GM12878 (cell line): ENCODE measurements at regions of chr17 and their contacts with region 1.

Region 1: DNA sequence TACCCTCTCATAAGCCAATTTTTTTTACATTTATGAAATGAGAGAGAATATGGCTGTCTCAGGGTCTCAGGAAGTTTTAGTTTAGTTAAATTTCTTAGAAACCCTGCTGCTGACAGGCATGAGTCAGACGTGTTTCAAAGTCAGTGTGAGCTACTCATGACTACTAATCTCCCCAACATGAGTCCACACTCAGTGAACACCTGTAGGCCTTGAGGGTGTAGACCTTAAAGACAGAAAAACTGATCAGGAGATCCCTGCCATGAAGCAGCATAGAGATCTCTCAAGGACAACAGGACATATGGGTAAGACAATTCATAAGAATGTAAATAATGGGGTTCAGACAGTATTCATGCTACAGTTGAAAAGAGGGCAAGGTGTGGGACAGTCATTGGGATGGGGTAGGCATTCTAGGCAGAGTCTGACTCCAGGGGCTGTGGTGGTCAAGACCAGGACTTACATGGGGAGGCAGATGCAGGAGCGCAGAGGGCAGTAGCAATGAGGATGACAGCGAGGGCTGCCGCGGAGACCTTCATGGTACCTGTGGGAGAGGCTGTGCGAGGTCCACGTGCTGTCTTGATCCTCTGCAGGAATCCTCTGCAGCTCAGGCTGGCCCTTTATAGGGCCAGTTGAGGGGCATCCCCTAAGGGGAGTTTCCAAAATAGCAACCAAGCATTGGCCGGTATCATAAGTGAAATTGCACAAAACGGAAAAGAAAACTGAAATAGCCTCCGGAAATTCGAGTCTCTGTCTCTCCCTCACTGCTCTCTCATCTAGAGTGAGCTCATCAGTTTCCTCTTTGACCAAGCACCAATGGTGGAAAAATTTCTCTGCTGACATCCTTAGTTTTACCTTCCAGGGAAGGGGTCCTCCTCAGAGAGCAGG is at the start of gene CCL5:
- DNase-seq: peak; percentile 84
- ATAC-seq: peak; percentile 95
- H3K4me3 ChIP-seq: peak within 1 kb of the TSS; percentile 26; the same call in 1 of the 2 replicates
- H3K27ac ChIP-seq: peak within 1 kb of the TSS; percentile 69
- H3K4me1 ChIP-seq: peaks cover 27% of the 10 kb centered on the region
- H3K27me3 ChIP-seq: no peaks in the 10 kb centered on the region
- CTCF ChIP-seq: no peak
- EP300 ChIP-seq: peak; percentile 34 to 81; a peak in 2 of 4 replicates
- POLR2A ChIP-seq: peak; percentile 97
- RAD21 ChIP-seq: no peak; the same call in 1 of the 2 replicates
- polyA plus RNA-seq, gene CCL5: 139 to 186 TPM

Region 2: DNA sequence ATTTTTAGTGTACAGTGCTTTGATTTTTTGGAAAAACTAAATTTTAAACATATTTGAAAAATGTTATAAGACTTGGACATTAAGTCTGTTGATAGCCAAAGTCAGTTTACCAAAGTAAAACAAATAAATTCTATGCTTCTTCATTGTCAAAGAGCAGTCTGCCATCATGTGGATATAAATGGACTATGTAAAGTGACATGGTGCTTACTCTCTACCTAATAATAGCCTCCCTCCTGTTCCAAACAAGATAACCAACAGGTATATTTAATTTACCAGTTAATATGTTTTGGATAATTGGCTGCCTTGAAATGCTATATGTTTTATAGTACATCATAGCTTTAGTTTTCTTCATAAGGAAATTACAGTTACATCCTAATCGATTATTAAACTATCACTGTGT is 54.8 kb before region 1 on chr17:
- CTCF ChIA-PET with region 1: no interaction called
- POLR2A ChIA-PET with region 1: no interaction called
- RAD21 ChIA-PET with region 1: no interaction called
- SMC1A ChIA-PET with region 1: no interaction called
- in situ Hi-C with region 1: no loop called
- intact Hi-C with region 1: no loop called
- DNase-seq: no peak
- ATAC-seq: no peak
- H3K4me3 ChIP-seq: no peak overlapping the region
- H3K27ac ChIP-seq: no peak overlapping the region
- H3K4me1 ChIP-seq: no peaks in the 10 kb centered on the region
- H3K27me3 ChIP-seq: no peaks in the 10 kb centered on the region
- CTCF ChIP-seq: no peak
- EP300 ChIP-seq: no peak
- POLR2A ChIP-seq: no peak
- RAD21 ChIP-seq: no peak

Region 3: GRCh38 chr17:35889818-35890763 is 10.1 kb after region 1 on chr17:
- CTCF ChIA-PET with region 1: interaction called, 11 read pairs
- POLR2A ChIA-PET with region 1: interaction called, 56 read pairs
- RAD21 ChIA-PET with region 1: interaction called, 125 read pairs
- SMC1A ChIA-PET with region 1: interaction called, 155 read pairs
- in situ Hi-C with region 1: no loop called
- intact Hi-C with region 1: no loop called
- DNase-seq: no peak
- ATAC-seq: peak; percentile 9; the same call in 2 of the 3 replicates
- H3K4me3 ChIP-seq: no peak overlapping the region
- H3K27ac ChIP-seq: no peak overlapping the region
- H3K4me1 ChIP-seq: peaks cover 28% of the 10 kb centered on the region
- H3K27me3 ChIP-seq: no peaks in the 10 kb centered on the region
- CTCF ChIP-seq: no peak
- EP300 ChIP-seq: no peak
- POLR2A ChIP-seq: no peak
- RAD21 ChIP-seq: no peak

Region 4: DNA sequence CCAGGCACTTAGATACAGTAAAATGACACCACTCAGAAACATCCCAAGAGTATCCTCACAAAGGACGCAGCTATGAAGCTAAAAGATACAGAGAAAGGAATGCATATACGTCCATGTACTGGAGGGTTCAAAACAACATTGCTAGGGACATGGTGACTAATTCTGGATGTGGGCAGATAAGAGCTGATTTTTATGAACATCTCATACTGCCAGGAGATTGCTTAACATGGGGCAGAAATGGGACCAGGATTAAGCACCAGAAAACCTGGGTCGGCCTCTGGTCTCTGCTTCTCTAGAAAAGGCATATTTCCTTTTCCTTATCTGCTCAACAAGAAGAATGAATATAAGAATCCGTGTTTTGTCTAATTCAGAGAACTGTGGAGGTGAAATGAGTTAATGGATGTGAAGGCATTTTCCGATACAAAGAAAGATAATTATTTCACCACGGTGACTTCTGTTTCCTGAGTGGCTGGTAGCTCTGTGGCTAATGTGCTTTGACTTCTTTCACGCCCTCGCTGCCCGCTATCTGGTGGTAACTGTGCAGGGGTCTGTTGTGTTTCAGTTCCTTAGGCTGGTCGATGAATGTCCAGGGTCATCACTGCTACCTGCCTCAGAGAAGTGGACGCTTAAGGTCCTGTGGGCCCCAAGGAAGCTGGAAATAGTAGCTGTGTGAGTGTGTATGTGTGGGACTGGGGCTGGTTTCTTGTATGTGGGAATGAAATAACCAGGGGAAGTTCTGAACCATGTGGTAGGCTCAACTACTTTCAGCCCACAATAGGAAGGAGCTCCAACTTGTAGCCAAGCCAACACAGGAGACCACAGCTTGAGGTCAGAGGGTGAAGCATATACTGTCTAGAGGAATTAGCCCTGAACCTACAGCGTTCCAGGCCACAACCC is 15.9 kb after region 1 on chr17:
- CTCF ChIA-PET with region 1: interaction called, 11 read pairs
- POLR2A ChIA-PET with region 1: interaction called, 56 read pairs
- RAD21 ChIA-PET with region 1: interaction called, 125 read pairs
- SMC1A ChIA-PET with region 1: interaction called, 155 read pairs
- in situ Hi-C with region 1: no loop called
- intact Hi-C with region 1: no loop called
- DNase-seq: no peak
- ATAC-seq: peak; percentile 69
- H3K4me3 ChIP-seq: no peak overlapping the region
- H3K27ac ChIP-seq: 0 out of 2 replicates have a peak overlapping the region, but pooled peaks have one; percentile 45
- H3K4me1 ChIP-seq: peaks cover 22% of the 10 kb centered on the region
- H3K27me3 ChIP-seq: no peaks in the 10 kb centered on the region
- CTCF ChIP-seq: no peak
- EP300 ChIP-seq: no peak
- POLR2A ChIP-seq: no peak
- RAD21 ChIP-seq: 0 out of 2 replicates have a peak, but pooled peaks have one; percentile 1

Region 5: DNA sequence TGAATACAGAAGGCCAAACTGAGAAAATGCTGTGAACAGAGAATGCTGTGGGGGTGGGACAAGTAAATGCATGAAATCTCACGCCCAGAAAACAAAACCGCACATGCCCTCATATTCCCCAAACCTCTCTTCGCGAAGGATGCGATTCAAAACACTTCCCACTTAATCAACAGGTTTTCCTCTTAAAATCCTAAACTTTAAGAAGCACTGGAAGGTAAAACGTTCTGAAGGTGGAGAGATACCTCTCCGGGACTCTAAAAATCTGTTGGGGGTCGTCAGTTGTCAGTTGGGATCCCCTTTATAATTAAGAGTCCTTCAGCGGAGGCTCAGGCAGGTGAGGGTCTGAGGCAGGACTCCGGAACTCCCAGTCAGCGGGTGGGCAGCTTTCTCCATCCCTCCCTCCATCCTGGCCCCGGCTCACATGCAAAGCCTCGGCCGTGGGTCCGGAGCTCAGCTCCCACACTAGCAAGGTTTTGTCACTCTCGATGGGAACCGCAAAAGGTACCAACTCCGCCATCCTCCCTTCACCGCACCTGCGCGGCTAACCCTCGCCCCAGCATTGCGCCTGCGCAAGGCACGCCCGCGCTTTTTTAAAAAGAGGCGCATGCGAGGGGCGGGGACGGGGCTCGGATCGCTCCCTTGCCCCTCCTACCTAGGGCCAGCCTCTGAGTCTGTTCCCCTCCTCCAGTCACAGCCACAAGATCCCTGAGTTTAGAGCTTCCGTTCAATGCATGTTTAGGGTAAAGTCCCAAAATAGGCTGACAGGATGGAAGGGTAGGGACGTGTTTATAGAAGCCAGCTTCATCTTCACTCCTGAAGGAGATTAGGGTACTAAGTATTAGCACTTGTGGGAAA is 50.4 kb after region 1 on chr17 and contains the start of gene RDM1:
- CTCF ChIA-PET with region 1: interaction called, 4 read pairs
- POLR2A ChIA-PET with region 1: interaction called, 5 read pairs
- RAD21 ChIA-PET with region 1: interaction called, 3 read pairs
- SMC1A ChIA-PET with region 1: interaction called, 17 read pairs
- in situ Hi-C with region 1: no loop called
- intact Hi-C with region 1: no loop called
- DNase-seq: peak; percentile 53
- ATAC-seq: peak; percentile 98
- H3K4me3 ChIP-seq: peak within 1 kb of the TSS; percentile 62
- H3K27ac ChIP-seq: peak within 1 kb of the TSS; percentile 51
- H3K4me1 ChIP-seq: peaks cover 5% of the 10 kb centered on the region; the same call in 1 of the 2 replicates
- H3K27me3 ChIP-seq: no peaks in the 10 kb centered on the region
- CTCF ChIP-seq: no peak
- EP300 ChIP-seq: peak in 1 of 2 experiments; percentile 3; a peak in 1 of 4 replicates
- POLR2A ChIP-seq: peak; percentile 77
- RAD21 ChIP-seq: no peak
- polyA plus RNA-seq, gene RDM1: 12.0 to 15.9 TPM